H1 (cell line): ENCODE measurements at regions of chr18 and their contacts with region 1.

Region 1: DNA sequence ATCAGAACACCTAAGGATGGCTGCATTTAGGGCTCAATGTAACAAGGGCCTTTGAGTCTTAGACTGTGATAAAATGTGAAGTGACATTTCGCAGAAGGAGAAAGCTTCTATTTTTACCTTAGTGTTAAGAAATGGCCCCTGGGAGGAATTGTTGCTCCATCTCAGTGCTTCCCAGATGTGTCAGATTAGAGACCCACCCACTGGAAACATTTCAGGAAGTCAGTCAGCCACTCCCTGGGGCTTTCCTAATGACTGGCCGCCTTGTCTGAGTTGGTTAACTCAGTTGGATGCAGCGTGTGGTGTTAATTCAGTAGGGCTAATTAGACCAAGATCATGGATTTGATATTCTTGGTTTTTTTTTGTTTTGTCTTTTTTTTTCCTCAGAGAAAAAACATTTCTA is 355.9 kb downstream of the PIK3C3 start:
- DNase-seq: no peak
- H3K4me3 ChIP-seq: no peak overlapping the region
- H3K27ac ChIP-seq: no peak overlapping the region
- H3K4me1 ChIP-seq: no peaks in the 10 kb centered on the region; a peak in 1 of 7 replicates
- H3K27me3 ChIP-seq: no peaks in the 10 kb centered on the region
- CTCF ChIP-seq: no peak
- EP300 ChIP-seq: no peak
- POLR2A ChIP-seq: no peak
- RAD21 ChIP-seq: no peak

Region 2: GRCh38 chr18:42298759-42299675 is 11.9 kb before region 1 on chr18:
- CTCF ChIA-PET with region 1: interaction called, 17 read pairs
- POLR2A ChIA-PET with region 1: no interaction called
- DNase-seq: peak; percentile 64 to 87
- H3K4me3 ChIP-seq: no peak overlapping the region
- H3K27ac ChIP-seq: no peak overlapping the region
- H3K4me1 ChIP-seq: peaks cover 0 to 3% (median 0%) of the 10 kb centered on the region in 4 experiments; a peak in 3 of 7 replicates
- H3K27me3 ChIP-seq: no peaks in the 10 kb centered on the region
- CTCF ChIP-seq: peak; percentile 74 to 91 (median 79)
- EP300 ChIP-seq: no peak
- POLR2A ChIP-seq: no peak
- RAD21 ChIP-seq: peak; percentile 89 to 93